PC-9 (cell line): ENCODE measurements at regions of chr15 and their contacts with region 1.

Region 1: DNA sequence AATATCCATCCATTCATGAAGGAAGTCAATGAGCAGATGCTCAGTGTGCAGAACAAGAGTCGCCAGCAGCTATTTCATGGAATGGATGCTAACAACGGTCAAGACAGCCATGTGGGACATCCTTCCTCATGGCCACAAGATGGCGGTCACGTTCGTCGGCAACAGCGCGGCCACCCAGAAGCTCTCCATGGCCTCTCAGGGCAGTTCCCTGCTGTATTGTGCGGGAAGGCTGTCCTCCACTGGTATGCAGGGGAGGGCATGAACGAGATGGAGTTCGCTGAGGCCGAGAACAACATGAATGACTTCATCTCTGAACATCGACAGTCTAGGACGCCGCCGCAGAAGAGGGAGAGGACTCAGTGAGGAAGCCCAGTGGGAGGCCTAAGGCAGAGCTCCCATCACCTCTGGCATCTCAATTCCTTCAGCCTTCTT is 208.3 kb downstream of the TJP1 start:
- DNase-seq: peak in 1 of 2 experiments; percentile 28
- H3K4me3 ChIP-seq: no peak overlapping the region
- H3K27ac ChIP-seq: no peak overlapping the region
- H3K4me1 ChIP-seq: no peaks in the 10 kb centered on the region
- H3K27me3 ChIP-seq: peaks cover 33% of the 10 kb centered on the region
- CTCF ChIP-seq: peak; percentile 60

Region 2: DNA sequence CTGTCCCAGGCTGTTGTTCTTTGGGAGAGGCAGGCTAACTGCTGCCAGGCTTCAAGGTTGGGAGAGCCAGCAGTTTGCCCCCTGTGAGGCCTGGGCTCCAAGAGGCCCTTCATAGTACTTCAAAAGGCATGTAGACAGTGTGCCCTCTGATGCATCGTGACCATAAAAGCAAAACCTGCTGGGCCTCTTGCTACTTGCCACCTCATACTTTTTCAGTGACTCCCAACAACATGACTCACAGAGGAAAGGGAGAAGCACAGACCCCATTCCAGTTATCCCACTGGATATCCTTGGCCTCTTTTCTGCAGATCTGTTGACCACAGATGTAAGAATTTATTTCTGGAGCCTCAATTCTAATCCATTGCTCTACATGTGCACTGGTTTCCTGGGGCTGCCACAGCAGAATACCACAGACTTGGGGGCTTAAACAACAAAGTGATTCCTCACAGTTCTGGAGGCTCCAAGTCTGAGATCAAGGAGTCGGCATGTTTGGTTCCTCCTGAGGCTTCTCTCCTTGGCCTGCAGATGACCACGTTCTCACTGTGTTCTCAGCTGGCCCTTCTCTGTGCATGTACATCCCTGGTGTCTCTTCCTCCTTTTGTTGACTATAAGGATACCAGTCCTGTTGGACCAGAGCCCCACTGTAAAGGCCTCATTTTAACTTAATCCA is 335.4 kb before region 1 on chr15:
- CTCF ChIA-PET with region 1: no interaction called
- POLR2A ChIA-PET with region 1: no interaction called
- intact Hi-C with region 1: no loop called
- DNase-seq: no peak
- H3K4me3 ChIP-seq: no peak overlapping the region
- H3K27ac ChIP-seq: no peak overlapping the region
- H3K4me1 ChIP-seq: no peaks in the 10 kb centered on the region
- H3K27me3 ChIP-seq: peaks cover 4% of the 10 kb centered on the region; the same call in 1 of the 2 replicates
- CTCF ChIP-seq: no peak

Region 3: GRCh38 chr15:30073915-30074314 is 459.9 kb after region 1 on chr15:
- CTCF ChIA-PET with region 1: no interaction called
- POLR2A ChIA-PET with region 1: no interaction called
- intact Hi-C with region 1: loop called (anchors 1 kb)
- DNase-seq: no peak
- H3K4me3 ChIP-seq: no peak overlapping the region
- H3K27ac ChIP-seq: no peak overlapping the region
- H3K4me1 ChIP-seq: no peaks in the 10 kb centered on the region
- H3K27me3 ChIP-seq: no peaks in the 10 kb centered on the region
- CTCF ChIP-seq: no peak